ENCODE measurements at regions of chr11 and their contacts with region 1.

Region 1: DNA sequence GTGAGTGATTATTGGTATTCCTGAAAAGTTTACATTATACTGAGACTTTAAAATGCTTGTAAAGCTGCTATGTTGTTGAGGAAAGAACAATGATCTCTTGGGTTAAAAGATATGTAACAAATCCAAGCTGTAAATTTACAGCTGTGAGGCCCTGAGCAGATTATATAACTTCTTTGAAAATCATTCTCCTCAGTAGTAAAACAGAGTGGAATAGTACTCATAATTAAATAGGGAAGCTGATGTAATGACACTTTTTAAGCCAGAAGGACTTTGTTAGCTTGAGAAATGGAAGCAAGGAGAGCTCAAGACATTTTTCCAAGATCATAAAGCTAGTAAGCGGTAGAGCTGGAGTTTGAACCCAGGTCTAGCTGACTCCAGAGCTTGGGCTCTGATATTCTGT is 363.9 kb downstream of the TMEM135 start:
- DNase-seq: no peak
- ATAC-seq: no peak

Region 2: DNA sequence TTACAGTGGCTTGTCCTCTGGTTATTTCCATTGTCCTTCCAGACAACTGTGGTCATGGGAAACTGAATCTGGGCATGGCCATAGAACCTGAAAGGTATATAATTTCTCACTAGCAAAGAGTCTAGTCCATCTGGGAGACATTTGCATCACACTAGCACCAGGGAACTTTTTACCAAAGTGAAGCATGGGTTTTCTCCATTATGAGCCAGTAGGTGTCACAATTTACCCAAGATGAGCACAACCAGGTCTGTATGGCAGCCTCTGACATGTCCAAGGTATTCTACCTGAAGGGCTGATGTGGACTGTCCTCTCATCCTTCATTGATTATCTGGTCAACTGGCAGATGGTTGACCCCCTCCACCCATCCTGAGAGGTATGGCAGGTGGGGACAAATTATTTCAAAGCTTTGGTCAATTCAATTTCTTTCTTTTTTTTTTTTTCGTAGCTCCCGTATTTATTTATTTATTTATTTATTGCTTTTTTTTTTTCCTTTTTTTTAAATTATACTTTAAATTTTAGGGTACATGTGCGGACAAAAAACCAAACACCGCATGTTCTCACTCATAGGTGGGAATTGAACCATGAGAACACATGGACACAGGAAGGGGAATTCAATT is 61.9 kb after region 1 on chr11:
- intact Hi-C with region 1: loop called (anchors 2 kb)
- DNase-seq: no peak
- ATAC-seq: no peak

Measured in Right ventricle myocardium inferior (tissue), 1 donor.